T-cell (primary cell): ENCODE measurements at regions of chr1 and their contacts with region 1.

Region 1: GRCh38 chr1:115595279-115596079 is 46.3 kb upstream of the VANGL1 start:
- DNase-seq: peak in 33 of 35 experiments; percentile 3 to 65 (median 34)
- ATAC-seq: peak in 1 of 4 experiments; percentile 45
- H3K4me3 ChIP-seq: no peak overlapping the region
- H3K4me3 Mint-ChIP-seq: no peak overlapping the region
- H3K27ac ChIP-seq: no peak overlapping the region
- H3K27ac Mint-ChIP-seq: no peak overlapping the region
- H3K4me1 ChIP-seq: no peaks in the 10 kb centered on the region
- H3K4me1 Mint-ChIP-seq: no peaks in the 10 kb centered on the region
- H3K27me3 ChIP-seq: peaks cover 0 to 10% of the 10 kb centered on the region in 2 experiments
- H3K27me3 Mint-ChIP-seq: peaks cover 4 to 10% of the 10 kb centered on the region in 2 donors

Region 2: GRCh38 chr1:115138968-115139367 is 456.5 kb before region 1 on chr1:
- CTCF ChIA-PET with region 1: interaction called, 4 to 10 read pairs
- POLR2A ChIA-PET with region 1: no interaction called
- DNase-seq: peak; percentile 2 to 77 (median 46)
- ATAC-seq: peak; percentile 81 to 88 (median 86)
- H3K4me3 ChIP-seq: peak overlapping the region in 1 of 2 donors; percentile 46
- H3K4me3 Mint-ChIP-seq: peak overlapping the region; percentile 9 to 55 (median 29)
- H3K27ac ChIP-seq: no peak overlapping the region
- H3K27ac Mint-ChIP-seq: no peak overlapping the region
- H3K4me1 ChIP-seq: peaks cover 0 to 2% of the 10 kb centered on the region in 2 experiments
- H3K4me1 Mint-ChIP-seq: peaks cover 0 to 5% (median 4%) of the 10 kb centered on the region in 3 donors
- H3K27me3 ChIP-seq: peaks cover 0 to 17% of the 10 kb centered on the region in 2 experiments
- H3K27me3 Mint-ChIP-seq: peaks cover 22 to 37% of the 10 kb centered on the region in 2 donors

Region 3: DNA sequence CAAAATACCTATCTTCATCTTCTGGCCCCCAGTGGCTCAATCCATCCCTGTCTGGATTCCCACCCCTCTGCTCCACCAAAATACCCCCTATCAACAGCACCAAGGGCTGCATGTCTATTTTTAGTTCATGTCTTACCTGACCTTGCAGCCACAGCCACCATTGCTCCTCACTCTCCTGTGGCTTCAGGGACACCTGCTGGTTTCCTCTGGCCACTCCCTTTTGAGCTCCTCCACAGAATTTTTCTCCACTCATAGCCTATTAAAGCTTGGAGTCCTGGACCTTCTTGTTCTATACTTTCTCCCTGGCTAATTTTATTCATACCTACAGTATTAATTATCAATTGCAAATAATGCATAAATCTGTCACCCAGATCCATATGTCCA is 132.1 kb before region 1 on chr1:
- CTCF ChIA-PET with region 1: no interaction called
- POLR2A ChIA-PET with region 1: no interaction called
- DNase-seq: no peak
- ATAC-seq: no peak
- H3K4me3 ChIP-seq: no peak overlapping the region
- H3K4me3 Mint-ChIP-seq: no peak overlapping the region
- H3K27ac ChIP-seq: no peak overlapping the region
- H3K27ac Mint-ChIP-seq: no peak overlapping the region
- H3K4me1 ChIP-seq: peaks cover 3 to 5% of the 10 kb centered on the region in 2 experiments
- H3K4me1 Mint-ChIP-seq: no peaks in the 10 kb centered on the region
- H3K27me3 ChIP-seq: peaks cover 0 to 7% of the 10 kb centered on the region in 2 experiments
- H3K27me3 Mint-ChIP-seq: no peaks in the 10 kb centered on the region

Region 4: GRCh38 chr1:116878804-116879477 is 1283.5 kb after region 1 on chr1:
- CTCF ChIA-PET with region 1: no interaction called
- POLR2A ChIA-PET with region 1: no interaction called
- DNase-seq: peak in 2 of 35 experiments; percentile 3 to 15
- ATAC-seq: peak in 1 of 4 experiments; percentile 18
- H3K4me3 ChIP-seq: peak overlapping the region; percentile 32 to 72
- H3K4me3 Mint-ChIP-seq: no peak overlapping the region
- H3K27ac ChIP-seq: peak overlapping the region; percentile 73
- H3K27ac Mint-ChIP-seq: no peak overlapping the region
- H3K4me1 ChIP-seq: peaks cover 32% of the 10 kb centered on the region in 2 experiments
- H3K4me1 Mint-ChIP-seq: peaks cover 13 to 21% (median 17%) of the 10 kb centered on the region in 3 donors
- H3K27me3 ChIP-seq: peaks cover 0 to 8% of the 10 kb centered on the region in 2 experiments
- H3K27me3 Mint-ChIP-seq: no peaks in the 10 kb centered on the region